ENCODE measurements at regions of chr1 and their contacts with region 1.

Region 1: DNA sequence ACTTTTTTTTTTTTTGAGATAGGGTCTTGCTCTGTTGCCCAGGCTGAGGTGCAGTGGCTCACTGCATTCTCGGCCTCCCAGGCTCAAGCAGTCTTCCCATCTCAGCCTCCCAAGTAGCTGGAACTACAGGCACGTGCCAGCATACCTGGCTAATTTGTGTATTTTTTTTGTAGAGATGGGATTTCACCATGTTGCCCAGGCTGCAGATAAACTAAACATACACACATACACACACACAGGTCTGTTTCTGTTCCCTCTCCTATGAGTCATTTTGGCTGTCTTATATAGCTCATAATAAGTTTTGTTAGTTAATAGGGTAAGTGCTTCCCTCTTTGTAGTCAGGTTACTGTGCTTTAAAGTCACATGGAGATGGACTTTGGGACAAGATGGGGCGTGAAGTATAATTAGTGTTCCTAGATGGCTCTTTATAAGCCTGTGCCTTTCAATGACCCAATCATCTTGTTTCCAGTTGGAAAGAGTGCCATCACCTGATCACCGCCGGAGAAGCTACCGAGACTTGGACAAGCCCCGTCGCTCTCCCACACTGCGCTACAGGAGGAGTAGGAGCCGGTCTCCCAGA is 9.1 kb downstream of the PRPF38A start:
- DNase-seq: no peak

Region 2: GRCh38 chr1:52474807-52475206 is 61.3 kb after region 1 on chr1:
- intact Hi-C with region 1: loop called in 1 of 2 experiments (anchors 5 kb)
- DNase-seq: no peak

Region 3: GRCh38 chr1:54249819-54250435 is 1836.4 kb after region 1 on chr1:
- intact Hi-C with region 1: loop called in 1 of 2 experiments (anchors 10 kb)
- DNase-seq: no peak